Gastrocnemius medialis (tissue), 4 donors: ENCODE measurements at regions of chr11 and their contacts with region 1.

Region 1: GRCh38 chr11:63916837-63917691 is at the start of gene RCOR2:
- DNase-seq: peak in 1 of 2 donors; percentile 67
- ATAC-seq: peak; percentile 44 to 51
- H3K4me3 ChIP-seq: peak within 1 kb of the TSS; percentile 49 to 66 (median 60)
- H3K27ac ChIP-seq: peak within 1 kb of the TSS; percentile 76 to 85 (median 80)
- H3K4me1 ChIP-seq: peaks cover 28 to 39% of the 10 kb centered on the region in 2 donors
- H3K27me3 ChIP-seq: no peaks in the 10 kb centered on the region
- CTCF ChIP-seq: no peak
- POLR2A ChIP-seq: no peak
- total RNA-seq, gene RCOR2: 0.25 to 1.5 (median 0.45) TPM

Region 2: GRCh38 chr11:63838678-63839507 is 78.2 kb before region 1 on chr11 and contains the start of gene MARK2:
- in situ Hi-C with region 1: no loop called
- intact Hi-C with region 1: loop called (anchors 1 kb)
- DNase-seq: peak; percentile 97
- ATAC-seq: peak; percentile 86 to 89
- H3K4me3 ChIP-seq: peak within 1 kb of the TSS; percentile 78 to 99 (median 86)
- H3K27ac ChIP-seq: peak within 1 kb of the TSS; percentile 82 to 94 (median 84)
- H3K4me1 ChIP-seq: peaks cover 35 to 40% of the 10 kb centered on the region in 2 donors
- H3K27me3 ChIP-seq: no peaks in the 10 kb centered on the region
- CTCF ChIP-seq: peak in 1 of 5 experiments; percentile 14
- POLR2A ChIP-seq: peak; percentile 87 to 89
- total RNA-seq, gene MARK2: 17.8 to 37.2 (median 30.3) TPM

Region 3: DNA sequence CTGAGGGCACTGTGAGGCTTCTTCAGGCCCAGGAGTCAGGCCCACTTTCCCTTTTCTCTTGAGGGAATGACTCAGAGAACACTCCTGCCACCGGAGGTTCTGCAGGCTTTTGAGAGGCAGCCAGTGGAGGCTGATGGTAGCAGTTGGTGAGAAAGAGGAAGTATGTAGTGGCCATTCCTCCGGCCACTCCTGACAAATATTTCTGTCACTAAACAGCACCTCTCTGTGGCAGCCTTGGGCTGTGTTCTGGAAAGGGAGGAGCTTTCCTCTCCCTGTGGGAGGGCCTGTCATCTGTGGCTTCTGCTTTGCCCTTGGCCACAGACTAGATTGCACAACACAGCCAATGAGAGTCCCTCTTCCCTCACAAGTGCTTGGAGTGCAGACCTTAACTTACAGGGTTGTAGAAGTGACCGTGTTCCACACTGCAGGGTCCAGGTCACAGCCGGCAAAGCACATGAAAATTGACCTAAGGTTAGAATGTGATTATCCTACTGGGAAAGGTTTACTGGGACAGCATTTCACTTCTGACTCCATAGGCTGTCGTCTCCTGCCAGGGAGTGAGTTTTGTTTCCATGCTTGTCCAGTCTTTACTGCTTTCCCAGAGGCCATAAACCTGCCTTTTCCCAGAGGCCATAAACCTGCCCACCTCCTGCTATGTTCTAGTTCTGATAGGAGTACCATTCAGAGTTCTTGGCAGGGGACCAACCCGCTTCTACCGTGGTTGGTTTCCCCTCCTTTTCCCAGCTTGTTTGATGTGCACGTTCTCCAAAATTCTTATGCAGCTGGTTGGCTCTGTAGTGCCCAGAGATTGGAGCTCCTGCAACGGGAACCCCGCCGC is 44.9 kb before region 1 on chr11:
- in situ Hi-C with region 1: no loop called
- intact Hi-C with region 1: loop called (anchors 5 kb)
- DNase-seq: peak; percentile 87 to 92
- ATAC-seq: peak; percentile 98
- H3K4me3 ChIP-seq: peak overlapping the region in 3 of 4 donors; percentile 10 to 46 (median 14)
- H3K27ac ChIP-seq: peak overlapping the region; percentile 71 to 86 (median 79)
- H3K4me1 ChIP-seq: peaks cover 53 to 56% of the 10 kb centered on the region in 2 donors
- H3K27me3 ChIP-seq: no peaks in the 10 kb centered on the region
- CTCF ChIP-seq: peak; percentile 42 to 56 (median 53)
- POLR2A ChIP-seq: peak in 1 of 2 donors; percentile 24

Region 4: GRCh38 chr11:63938479-63939396 is 21.7 kb after region 1 on chr11 and contains the start of gene NAA40:
- in situ Hi-C with region 1: no loop called
- intact Hi-C with region 1: loop called (anchors 1 kb)
- DNase-seq: peak; percentile 75 to 88
- ATAC-seq: peak; percentile 78 to 86
- H3K4me3 ChIP-seq: peak within 1 kb of the TSS; percentile 69 to 84 (median 80)
- H3K27ac ChIP-seq: peak within 1 kb of the TSS; percentile 78 to 88 (median 84)
- H3K4me1 ChIP-seq: peaks cover 21% of the 10 kb centered on the region in 2 donors
- H3K27me3 ChIP-seq: no peaks in the 10 kb centered on the region
- CTCF ChIP-seq: peak in 1 of 5 experiments; percentile 12
- POLR2A ChIP-seq: peak in 1 of 2 donors; percentile 32
- total RNA-seq, gene NAA40: 4.9 to 11.4 (median 6.5) TPM

Region 5: DNA sequence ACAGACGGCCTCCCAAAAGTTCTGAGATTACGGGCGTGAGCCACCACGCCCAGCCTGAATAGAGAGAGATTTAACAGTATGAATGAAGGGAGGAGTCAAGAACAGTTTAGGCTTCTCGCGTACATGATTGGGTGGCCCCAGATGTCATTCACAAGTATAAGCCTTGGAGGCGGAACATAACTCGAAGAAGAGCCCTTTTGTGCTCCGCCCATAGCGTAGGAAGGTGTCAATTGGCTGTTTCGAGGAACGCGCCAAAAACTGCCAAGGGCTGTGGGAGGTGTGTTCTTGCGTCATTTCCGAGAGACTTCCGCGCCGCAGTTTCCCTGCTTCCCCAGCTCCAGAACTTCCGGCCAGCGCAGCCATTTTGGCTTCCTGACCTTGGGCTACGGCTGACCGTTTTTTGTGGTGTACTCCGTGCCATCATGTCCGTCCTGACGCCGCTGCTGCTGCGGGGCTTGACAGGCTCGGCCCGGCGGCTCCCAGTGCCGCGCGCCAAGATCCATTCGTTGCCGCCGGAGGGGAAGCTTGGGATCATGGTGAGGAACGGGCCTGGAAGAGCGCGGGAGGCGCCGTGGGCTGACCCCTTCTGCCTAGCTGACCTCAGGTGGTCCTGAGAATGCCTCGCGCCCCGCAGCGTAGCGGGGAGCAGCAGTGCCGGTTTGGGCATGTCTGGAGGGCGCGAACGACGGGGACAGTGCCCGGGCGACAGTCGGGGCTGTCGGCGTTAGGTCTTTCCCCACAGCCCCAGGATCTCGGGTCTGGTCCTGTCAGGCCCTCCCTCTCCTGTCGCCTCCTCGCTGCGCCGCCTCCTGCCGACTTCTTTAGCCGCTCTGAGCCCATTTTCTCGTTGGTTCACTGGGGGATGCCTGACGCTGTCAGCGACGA is 57.4 kb after region 1 on chr11 and contains the start of gene COX8A:
- in situ Hi-C with region 1: no loop called
- intact Hi-C with region 1: loop called (anchors 2 kb)
- DNase-seq: peak; percentile 98 to 99
- ATAC-seq: peak; percentile 98
- H3K4me3 ChIP-seq: peak within 1 kb of the TSS; percentile 59 to 100 (median 96)
- H3K27ac ChIP-seq: peak within 1 kb of the TSS; percentile 90 to 100 (median 98)
- H3K4me1 ChIP-seq: peaks cover 24 to 27% of the 10 kb centered on the region in 2 donors
- H3K27me3 ChIP-seq: no peaks in the 10 kb centered on the region
- CTCF ChIP-seq: peak in 3 of 5 experiments; percentile 8 to 37 (median 14)
- POLR2A ChIP-seq: peak; percentile 47 to 66
- total RNA-seq, gene COX8A: 812 to 1,326 (median 983) TPM